Posterior vena cava (tissue), 2 donors: ENCODE measurements at regions of chr13 and their contacts with region 1.

Region 1: DNA sequence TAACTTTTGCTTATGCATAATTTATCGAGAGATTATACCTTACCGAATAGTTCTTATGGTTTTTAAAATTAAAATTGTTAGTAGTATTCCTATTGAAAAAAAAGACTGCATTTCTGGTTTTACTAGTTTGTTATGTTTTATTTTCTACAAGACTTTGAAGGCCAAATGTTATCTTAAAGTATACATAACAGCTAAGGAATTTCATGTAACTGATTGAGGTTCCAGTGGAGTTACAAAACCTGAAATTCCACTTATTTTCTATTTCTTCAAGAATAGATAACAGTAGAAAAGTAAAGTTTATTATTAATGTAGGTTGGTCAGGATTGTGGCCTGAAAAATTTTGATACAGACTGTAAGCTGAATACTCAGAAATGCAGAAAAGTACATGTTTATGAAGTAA is 1216.0 kb upstream of the PCDH20 start:
- DNase-seq: no peak

Region 2: GRCh38 chr13:61045251-61045650 is 1586.4 kb before region 1 on chr13:
- intact Hi-C with region 1: no loop called
- DNase-seq: no peak

Region 3: DNA sequence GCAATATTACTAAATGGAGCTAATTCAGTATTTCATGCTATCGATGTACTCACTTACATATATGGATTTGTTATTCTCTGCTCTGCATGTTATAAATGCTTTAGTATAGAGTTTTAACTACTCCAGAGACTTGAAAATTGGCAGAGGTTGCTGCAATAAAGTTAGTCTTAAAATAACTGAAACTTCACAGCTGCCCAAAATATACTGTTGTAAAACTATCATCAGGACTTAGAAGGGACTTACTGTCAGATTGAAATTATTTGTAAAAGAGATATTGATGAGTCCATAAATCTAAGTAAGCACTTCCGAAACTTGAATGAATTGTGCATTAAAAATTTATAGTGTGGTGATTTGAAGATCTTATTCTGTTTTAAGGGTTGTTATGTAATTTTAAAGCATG is 37.8 kb before region 1 on chr13:
- intact Hi-C with region 1: loop called in 1 of 2 experiments (anchors 2 kb)
- DNase-seq: no peak

Region 4: GRCh38 chr13:62653371-62653770 is 21.8 kb after region 1 on chr13:
- intact Hi-C with region 1: no loop called
- DNase-seq: no peak